ENCODE measurements at regions of chr6 and their contacts with region 1.

Region 1: GRCh38 chr6:158595223-158595622 is 35.3 kb downstream of the TMEM181 start:
- DNase-seq: peak in 4 of 5 donors; percentile 12 to 26 (median 21)
- H3K4me3 ChIP-seq: no peak overlapping the region
- H3K4me3 Mint-ChIP-seq: no peak overlapping the region
- H3K27ac ChIP-seq: no peak overlapping the region
- H3K27ac Mint-ChIP-seq: peak overlapping the region in 1 of 7 donors; percentile 52
- H3K4me1 ChIP-seq: no peaks in the 10 kb centered on the region
- H3K4me1 Mint-ChIP-seq: peaks cover 0 to 12% (median 2%) of the 10 kb centered on the region in 4 donors
- H3K27me3 ChIP-seq: no peaks in the 10 kb centered on the region
- H3K27me3 Mint-ChIP-seq: no peaks in the 10 kb centered on the region

Region 2: GRCh38 chr6:158548418-158549161 is 46.6 kb before region 1 on chr6:
- CTCF ChIA-PET with region 1: no interaction called
- POLR2A ChIA-PET with region 1: no interaction called
- intact Hi-C with region 1: no loop called
- DNase-seq: no peak
- H3K4me3 ChIP-seq: no peak overlapping the region
- H3K4me3 Mint-ChIP-seq: no peak overlapping the region
- H3K27ac ChIP-seq: no peak overlapping the region
- H3K27ac Mint-ChIP-seq: no peak overlapping the region
- H3K4me1 ChIP-seq: no peaks in the 10 kb centered on the region
- H3K4me1 Mint-ChIP-seq: no peaks in the 10 kb centered on the region
- H3K27me3 ChIP-seq: no peaks in the 10 kb centered on the region
- H3K27me3 Mint-ChIP-seq: peaks cover 0 to 3% of the 10 kb centered on the region in 2 donors

Region 3: DNA sequence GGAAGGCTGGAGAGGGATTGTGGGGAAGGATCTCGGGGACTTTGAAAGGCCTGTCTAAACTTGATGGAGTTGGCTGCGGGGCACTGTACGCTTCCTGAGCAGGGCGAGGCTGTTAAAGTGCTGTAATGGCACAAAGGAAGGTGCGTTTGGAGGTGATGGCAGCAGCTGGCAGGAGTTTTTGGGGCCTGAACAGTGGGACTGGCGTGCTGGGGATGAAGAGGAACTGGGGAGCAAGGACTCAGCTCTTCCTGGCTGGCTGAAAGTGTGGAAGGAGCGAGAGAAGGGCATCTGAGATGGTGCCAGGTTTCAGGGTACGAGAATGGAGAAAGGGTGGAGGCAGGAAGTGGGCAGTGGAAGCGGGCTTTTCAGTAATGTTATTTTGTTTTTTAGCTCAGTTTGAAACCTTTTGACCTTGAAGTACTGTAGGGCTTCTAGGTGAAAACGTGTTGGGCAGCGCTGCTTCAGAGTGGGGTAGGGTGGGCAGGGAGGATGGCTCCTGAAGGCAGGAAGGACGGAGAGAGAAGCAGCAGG is 27.3 kb before region 1 on chr6:
- CTCF ChIA-PET with region 1: interaction called, 10 read pairs
- POLR2A ChIA-PET with region 1: interaction called, 5 read pairs
- intact Hi-C with region 1: no loop called
- DNase-seq: peak in 4 of 5 donors; percentile 10 to 32 (median 24)
- H3K4me3 ChIP-seq: peak overlapping the region in 1 of 2 donors; percentile 36
- H3K4me3 Mint-ChIP-seq: peak overlapping the region; percentile 66 to 90 (median 86)
- H3K27ac ChIP-seq: peak overlapping the region; percentile 50
- H3K27ac Mint-ChIP-seq: peak overlapping the region; percentile 87 to 97 (median 95)
- H3K4me1 ChIP-seq: peaks cover 79% of the 10 kb centered on the region
- H3K4me1 Mint-ChIP-seq: peaks cover 58 to 90% (median 76%) of the 10 kb centered on the region in 4 donors
- H3K27me3 ChIP-seq: no peaks in the 10 kb centered on the region
- H3K27me3 Mint-ChIP-seq: no peaks in the 10 kb centered on the region

Region 4: GRCh38 chr6:158605266-158605878 is 10.1 kb after region 1 on chr6:
- CTCF ChIA-PET with region 1: interaction called, 20 read pairs
- POLR2A ChIA-PET with region 1: no interaction called
- intact Hi-C with region 1: no loop called
- DNase-seq: peak; percentile 36 to 53 (median 51)
- H3K4me3 ChIP-seq: no peak overlapping the region
- H3K4me3 Mint-ChIP-seq: no peak overlapping the region
- H3K27ac ChIP-seq: no peak overlapping the region
- H3K27ac Mint-ChIP-seq: peak overlapping the region in 5 of 7 donors; percentile 7 to 80 (median 76)
- H3K4me1 ChIP-seq: no peaks in the 10 kb centered on the region
- H3K4me1 Mint-ChIP-seq: peaks cover 5 to 15% (median 14%) of the 10 kb centered on the region in 4 donors
- H3K27me3 ChIP-seq: no peaks in the 10 kb centered on the region
- H3K27me3 Mint-ChIP-seq: no peaks in the 10 kb centered on the region

Region 5: DNA sequence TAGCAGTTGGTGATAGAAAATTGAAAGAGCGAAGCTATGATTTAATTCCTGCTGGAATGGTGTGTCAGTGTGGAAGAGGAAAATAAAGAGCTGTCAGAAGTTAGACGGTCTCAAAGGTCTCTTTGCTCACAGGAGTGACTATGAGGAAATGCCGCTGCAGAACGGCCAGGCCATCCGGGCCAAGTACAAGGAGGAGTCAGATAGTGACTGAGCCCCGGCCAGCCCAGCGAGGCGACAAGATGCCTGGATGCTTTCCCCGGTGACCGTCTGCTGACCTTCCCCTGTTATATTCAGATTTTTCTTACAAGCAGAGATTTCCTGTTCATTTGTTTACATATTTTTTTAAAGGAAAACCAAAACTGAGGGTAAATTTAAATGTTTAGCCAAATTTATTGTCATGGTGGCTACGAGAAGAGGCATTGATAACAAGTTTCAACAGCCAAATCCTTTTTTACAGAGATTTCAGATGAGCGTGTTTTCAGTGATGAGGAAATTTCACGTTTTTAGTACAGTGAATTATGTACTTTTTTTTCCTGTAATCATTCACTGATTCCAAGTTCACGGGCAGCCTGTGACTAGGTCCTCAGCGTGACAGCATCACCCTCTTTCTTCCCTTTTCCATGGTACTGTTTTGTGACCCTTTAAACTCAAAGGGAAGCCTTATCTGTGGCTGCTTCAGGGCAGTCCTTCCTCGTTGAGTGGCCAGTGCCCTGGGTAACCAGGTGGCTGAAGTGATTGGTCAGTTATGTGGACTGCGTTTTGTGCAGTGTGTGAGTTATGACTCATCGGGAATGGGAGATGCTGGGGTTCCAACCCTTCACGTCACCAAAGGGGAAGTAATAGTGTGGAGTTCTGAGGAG is 36.7 kb after region 1 on chr6:
- CTCF ChIA-PET with region 1: no interaction called
- POLR2A ChIA-PET with region 1: no interaction called
- intact Hi-C with region 1: no loop called
- DNase-seq: peak in 1 of 5 donors; percentile 12
- H3K4me3 ChIP-seq: no peak overlapping the region
- H3K4me3 Mint-ChIP-seq: no peak overlapping the region
- H3K27ac ChIP-seq: no peak overlapping the region
- H3K27ac Mint-ChIP-seq: peak overlapping the region; percentile 68 to 96 (median 94)
- H3K4me1 ChIP-seq: peaks cover 31% of the 10 kb centered on the region
- H3K4me1 Mint-ChIP-seq: peaks cover 24 to 52% (median 40%) of the 10 kb centered on the region in 4 donors
- H3K27me3 ChIP-seq: no peaks in the 10 kb centered on the region
- H3K27me3 Mint-ChIP-seq: no peaks in the 10 kb centered on the region